ENCODE measurements at regions of chr5 and their contacts with region 1.

Region 1: DNA sequence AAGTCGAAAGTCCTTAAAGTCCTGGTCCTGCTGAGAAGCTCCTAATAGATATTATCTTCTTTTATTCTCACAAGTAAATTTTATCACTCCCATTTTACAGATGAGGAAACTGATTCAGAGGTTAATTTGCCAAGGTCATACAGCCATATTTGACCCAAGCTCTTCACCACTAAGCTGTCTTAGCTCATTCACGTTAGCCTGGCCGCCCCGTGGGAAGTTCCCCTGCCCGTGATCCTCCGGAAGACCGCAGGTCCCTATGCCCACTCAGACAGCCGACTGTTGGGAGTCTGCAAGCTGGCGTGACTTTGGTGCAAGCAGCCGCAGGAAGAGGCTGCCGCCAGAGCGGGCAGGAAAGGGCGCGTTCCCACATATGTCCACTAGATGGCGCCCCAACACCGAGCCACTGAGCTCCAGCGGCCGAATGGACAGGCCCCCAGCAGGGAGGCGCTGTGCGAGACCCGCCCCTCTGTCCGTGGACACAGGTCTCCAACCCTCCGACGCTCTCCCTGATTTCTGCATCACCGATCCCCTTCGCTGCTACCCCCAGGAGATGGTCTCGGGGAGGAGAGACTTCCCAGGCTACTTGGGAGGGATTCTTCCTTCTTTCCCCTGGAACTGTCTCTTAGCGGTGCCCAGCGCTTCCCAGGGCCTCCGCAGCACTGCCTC is 10.0 kb upstream of the ARAP3 start:
- DNase-seq: peak; percentile 97
- H3K4me3 Mint-ChIP-seq: peak overlapping the region; percentile 85
- H3K27ac Mint-ChIP-seq: peak overlapping the region; percentile 86
- H3K4me1 Mint-ChIP-seq: peaks cover 32% of the 10 kb centered on the region
- H3K27me3 Mint-ChIP-seq: peaks cover 26% of the 10 kb centered on the region

Region 2: GRCh38 chr5:141811287-141812155 is 119.5 kb after region 1 on chr5:
- intact Hi-C with region 1: loop called (anchors 1 kb)
- DNase-seq: peak; percentile 72
- H3K4me3 Mint-ChIP-seq: no peak overlapping the region
- H3K27ac Mint-ChIP-seq: no peak overlapping the region
- H3K4me1 Mint-ChIP-seq: no peaks in the 10 kb centered on the region
- H3K27me3 Mint-ChIP-seq: peaks cover 49% of the 10 kb centered on the region

Region 3: GRCh38 chr5:141923448-141924352 is 231.7 kb after region 1 on chr5 and contains the start of gene DELE1:
- intact Hi-C with region 1: loop called (anchors 2 kb)
- DNase-seq: peak; percentile 97
- H3K4me3 Mint-ChIP-seq: peak within 1 kb of the TSS; percentile 86
- H3K27ac Mint-ChIP-seq: peak within 1 kb of the TSS; percentile 87
- H3K4me1 Mint-ChIP-seq: peaks cover 31% of the 10 kb centered on the region
- H3K27me3 Mint-ChIP-seq: no peaks in the 10 kb centered on the region
- total RNA-seq, gene DELE1: 66.7 and 72.0 TPM in 2 replicates

Region 4: DNA sequence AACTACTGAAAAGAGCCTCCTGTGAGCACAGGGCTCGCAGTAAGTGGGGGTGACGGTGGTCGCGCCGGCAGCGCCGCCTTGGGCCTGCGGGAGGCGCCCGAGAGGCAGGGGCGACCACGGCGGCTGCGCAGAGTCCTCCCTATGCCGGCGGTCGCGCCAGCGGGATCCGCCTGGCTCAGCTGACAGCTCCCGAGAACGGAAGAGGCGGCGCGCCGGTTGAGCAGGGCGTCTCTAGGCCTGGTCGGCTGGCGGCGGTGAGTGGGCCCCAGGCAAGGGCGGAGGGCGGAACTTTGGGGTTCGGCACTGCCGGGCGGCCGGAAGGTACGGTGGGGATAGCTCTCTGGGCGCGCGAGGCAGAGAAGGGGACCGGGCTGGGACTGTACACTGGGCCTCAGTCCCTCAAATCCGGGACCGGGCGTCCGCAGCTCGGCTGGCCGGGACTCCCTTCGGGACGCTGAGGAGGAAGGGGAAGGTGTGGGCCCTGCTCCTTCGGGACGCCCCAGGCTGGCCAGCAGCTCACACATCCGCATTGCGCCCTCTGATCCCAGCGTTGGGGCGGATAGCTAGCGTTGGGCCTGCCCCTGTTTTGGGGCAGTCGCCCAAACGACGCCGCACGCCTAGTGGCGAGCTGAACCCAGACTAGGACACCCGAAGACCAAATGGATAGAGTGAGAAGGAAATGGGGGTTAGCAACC is 277.1 kb after region 1 on chr5 and contains the start of gene RNF14:
- intact Hi-C with region 1: loop called (anchors 2 kb)
- DNase-seq: peak; percentile 99
- H3K4me3 Mint-ChIP-seq: peak within 1 kb of the TSS; percentile 89
- H3K27ac Mint-ChIP-seq: peak within 1 kb of the TSS; percentile 98
- H3K4me1 Mint-ChIP-seq: peaks cover 34% of the 10 kb centered on the region
- H3K27me3 Mint-ChIP-seq: no peaks in the 10 kb centered on the region
- total RNA-seq, gene RNF14: 28.8 and 32.2 TPM in 2 replicates

Region 5: DNA sequence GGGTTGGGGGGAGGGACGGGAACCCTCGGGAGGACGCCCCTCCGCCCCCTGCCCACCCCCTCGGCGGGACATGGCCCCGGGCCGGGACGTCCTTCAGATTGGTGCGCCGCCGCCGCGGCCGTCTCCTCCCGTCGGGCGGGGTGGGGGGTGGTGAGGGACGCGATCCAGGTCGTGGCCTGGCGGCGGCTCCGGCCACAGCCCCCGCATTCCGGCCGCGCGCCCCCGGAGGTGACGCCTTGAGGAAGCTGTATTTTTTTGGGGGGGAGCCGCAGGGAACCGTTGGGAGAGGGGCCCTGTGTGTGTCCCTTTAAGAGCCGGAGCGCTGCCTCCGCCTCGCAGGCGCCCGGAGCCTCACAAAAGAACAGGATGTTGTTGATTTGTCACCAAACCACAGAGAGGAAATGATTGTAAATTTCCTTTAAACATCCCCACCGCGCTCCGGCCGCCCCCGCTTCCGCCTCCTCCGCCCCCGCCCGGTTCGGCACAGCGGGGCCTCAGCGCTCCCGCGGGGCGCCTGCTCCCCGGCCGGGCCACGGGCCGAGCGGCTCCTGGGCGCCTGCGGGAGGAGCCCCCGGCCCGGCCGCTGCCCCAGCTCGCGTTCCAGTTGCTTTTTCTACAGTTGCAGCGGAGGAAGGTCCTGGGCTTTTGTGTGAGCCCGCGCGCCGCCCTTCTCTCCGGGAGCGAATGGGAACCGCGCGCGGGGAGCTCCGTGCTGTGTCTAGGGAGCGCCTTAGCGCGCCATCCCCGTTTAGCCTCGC is 664.9 kb after region 1 on chr5:
- intact Hi-C with region 1: loop called (anchors 2 kb)
- DNase-seq: peak; percentile 97
- H3K4me3 Mint-ChIP-seq: peak overlapping the region; percentile 79
- H3K27ac Mint-ChIP-seq: peak overlapping the region; percentile 94
- H3K4me1 Mint-ChIP-seq: peaks cover 40% of the 10 kb centered on the region
- H3K27me3 Mint-ChIP-seq: peaks cover 3% of the 10 kb centered on the region

Measured in activated CD4-positive, alpha-beta T cell treated with anti-CD3 and anti-CD28 coated beads, Interleukin-2, amount 10 ng/mL, durations not matched to agents 24 days and 14 days (primary cell).